ENCODE measurements at regions of chr13 and their contacts with region 1.

Region 1: DNA sequence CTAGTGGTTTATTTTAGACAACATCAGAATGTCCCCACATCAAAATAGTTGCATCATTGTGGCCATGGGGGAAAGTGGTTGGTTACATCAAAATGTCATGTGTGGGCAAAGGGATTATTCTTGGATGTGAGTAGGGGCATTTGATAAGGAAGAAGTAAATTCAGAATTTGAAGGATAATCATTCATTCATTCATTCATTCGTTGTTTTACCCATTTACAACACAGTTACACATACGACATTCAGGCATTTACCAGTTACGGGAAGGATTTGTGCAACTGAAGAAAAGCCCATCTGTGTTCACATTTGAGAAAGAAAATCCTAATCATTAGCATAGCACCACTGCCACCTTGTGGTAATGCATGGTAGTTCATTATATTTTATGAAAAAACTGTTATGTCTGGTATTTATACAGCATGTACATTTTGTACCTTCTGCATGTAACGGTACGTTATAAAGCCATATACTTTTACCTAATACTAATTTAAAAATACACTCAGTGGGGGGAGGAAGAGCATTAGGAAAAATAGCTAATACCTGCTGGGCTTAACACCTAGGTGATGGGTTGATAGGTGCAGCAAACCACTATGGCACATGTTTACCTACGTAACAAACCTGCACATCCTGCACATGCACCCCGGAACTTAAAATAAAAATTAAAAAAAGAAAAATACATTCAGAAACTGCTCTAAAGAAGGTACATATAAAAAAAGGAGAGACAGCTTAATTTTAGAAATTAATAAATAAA is 62.1 kb downstream of the DGKH start:
- DNase-seq: peak; percentile 43
- ATAC-seq: peak; percentile 22; the same call in 1 of the 2 replicates
- H3K4me3 ChIP-seq: no peak overlapping the region
- H3K27ac ChIP-seq: no peak overlapping the region
- H3K4me1 ChIP-seq: peaks cover 13 to 26% of the 10 kb centered on the region in 2 experiments
- H3K27me3 ChIP-seq: no peaks in the 10 kb centered on the region
- CTCF ChIP-seq: peak; percentile 45 to 81 (median 55); a peak in 4 of 6 replicates
- POLR2A ChIP-seq: no peak
- RAD21 ChIP-seq: peak; percentile 87

Region 2: DNA sequence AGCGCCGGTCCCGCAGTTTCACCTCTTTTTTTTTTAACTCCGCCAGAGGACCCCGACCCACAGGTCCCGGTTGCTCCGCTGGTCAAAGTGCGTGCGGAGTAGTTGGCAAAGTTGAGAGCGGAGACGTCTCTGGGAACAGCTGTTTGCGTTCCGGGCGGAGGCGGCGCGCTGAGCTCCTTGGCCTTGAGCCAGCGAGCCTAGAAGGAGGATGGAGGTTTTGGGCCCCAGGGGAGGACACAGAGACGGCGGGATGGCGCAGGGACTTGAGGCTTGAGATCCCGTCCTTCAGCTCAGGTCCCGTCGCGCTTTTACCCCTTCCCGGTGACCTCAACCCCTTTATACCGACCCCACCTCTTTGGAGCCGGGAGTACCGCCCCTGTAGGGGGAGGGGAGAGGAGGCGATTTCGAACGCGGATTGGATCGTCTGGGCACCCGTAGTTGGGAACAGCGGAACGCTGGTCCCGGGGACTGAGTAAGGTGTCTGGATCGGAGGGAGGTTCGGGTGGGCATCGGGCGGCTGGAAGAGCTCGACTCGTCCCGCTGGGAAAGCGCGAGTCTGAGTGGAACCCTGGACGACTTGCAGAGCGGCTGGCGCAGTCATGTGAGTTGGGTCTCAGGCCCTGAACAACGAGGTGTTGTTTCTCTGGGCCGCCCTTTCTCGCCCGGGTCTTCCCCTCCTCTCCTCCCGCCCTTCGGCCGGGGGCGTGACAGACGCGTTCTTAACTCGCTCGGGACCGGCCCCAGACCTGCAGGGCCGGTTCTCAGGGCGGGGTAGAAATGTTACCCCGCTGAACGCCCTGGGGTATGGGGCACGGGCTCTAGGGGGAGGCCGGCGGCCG is 1049.3 kb before region 1 on chr13 and contains the start of gene WBP4:
- CTCF ChIA-PET with region 1: no interaction called
- POLR2A ChIA-PET with region 1: interaction called, 4 read pairs
- RAD21 ChIA-PET with region 1: no interaction called
- intact Hi-C with region 1: loop called (anchors 5 kb)
- DNase-seq: peak; percentile 94
- ATAC-seq: peak; percentile 76
- H3K4me3 ChIP-seq: peak within 1 kb of the TSS; percentile 69 to 70
- H3K27ac ChIP-seq: peak within 1 kb of the TSS; percentile 94
- H3K4me1 ChIP-seq: peaks cover 49 to 67% of the 10 kb centered on the region in 2 experiments
- H3K27me3 ChIP-seq: no peaks in the 10 kb centered on the region
- CTCF ChIP-seq: no peak
- POLR2A ChIP-seq: peak; percentile 69
- RAD21 ChIP-seq: no peak
- total RNA-seq, gene WBP4: 14.5 TPM

Region 3: DNA sequence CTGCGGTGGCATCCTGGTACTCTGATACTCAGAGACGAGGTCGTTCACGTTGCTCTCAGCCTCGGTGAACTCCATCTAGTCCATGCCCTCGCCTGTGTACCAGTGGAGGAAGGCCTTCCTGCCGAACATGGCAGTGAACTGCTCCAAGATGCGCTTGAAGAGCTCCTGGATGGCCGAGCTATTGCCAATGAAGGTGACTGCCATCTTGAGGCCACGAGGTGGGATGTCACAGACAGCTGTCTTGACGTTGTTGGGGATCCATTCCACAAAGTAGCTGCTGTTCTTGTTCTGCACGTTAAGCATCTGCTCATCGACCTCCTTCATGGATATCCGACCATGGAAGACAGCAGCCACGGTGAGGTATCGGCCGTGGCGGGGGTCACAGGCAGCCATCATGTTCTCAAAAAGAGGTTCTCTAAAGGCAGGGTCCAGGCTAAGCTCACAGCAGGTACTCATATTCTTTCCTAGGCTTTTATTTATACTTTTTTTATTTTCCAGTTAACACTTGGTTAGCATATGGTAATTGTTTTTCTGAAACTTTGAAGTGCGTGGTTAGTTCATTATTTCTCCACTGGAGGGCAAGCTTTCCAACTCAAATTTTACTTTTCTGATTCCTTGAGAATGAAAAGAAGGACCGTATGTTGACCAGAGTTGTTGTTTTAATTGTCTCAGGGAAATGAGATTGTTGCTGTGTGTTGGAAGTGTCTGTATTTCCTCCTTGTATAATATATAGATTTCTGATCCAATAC is 725.7 kb before region 1 on chr13:
- CTCF ChIA-PET with region 1: interaction called, 3 read pairs
- POLR2A ChIA-PET with region 1: no interaction called
- RAD21 ChIA-PET with region 1: no interaction called
- intact Hi-C with region 1: loop called (anchors 10 kb)
- DNase-seq: no peak
- ATAC-seq: peak; percentile 52
- H3K4me3 ChIP-seq: no peak overlapping the region
- H3K27ac ChIP-seq: no peak overlapping the region
- H3K4me1 ChIP-seq: no peaks in the 10 kb centered on the region
- H3K27me3 ChIP-seq: no peaks in the 10 kb centered on the region
- CTCF ChIP-seq: peak; percentile 28 to 58 (median 40); a peak in 4 of 6 replicates
- POLR2A ChIP-seq: no peak
- RAD21 ChIP-seq: peak; percentile 50

Region 4: GRCh38 chr13:41411522-41411921 is 699.1 kb before region 1 on chr13:
- CTCF ChIA-PET with region 1: no interaction called
- POLR2A ChIA-PET with region 1: no interaction called
- RAD21 ChIA-PET with region 1: no interaction called
- intact Hi-C with region 1: loop called (anchors 1 kb)
- DNase-seq: peak; percentile 23
- ATAC-seq: peak; percentile 89
- H3K4me3 ChIP-seq: no peak overlapping the region
- H3K27ac ChIP-seq: no peak overlapping the region
- H3K4me1 ChIP-seq: 0 out of 4 replicates have a peak, but pooled peaks cover 0 to 4% of the 10 kb centered on the region in 2 experiments
- H3K27me3 ChIP-seq: no peaks in the 10 kb centered on the region
- CTCF ChIP-seq: peak; percentile 24 to 36 (median 32); a peak in 3 of 6 replicates
- POLR2A ChIP-seq: no peak
- RAD21 ChIP-seq: peak; percentile 70

Region 5: GRCh38 chr13:41774605-41775218 is 335.9 kb before region 1 on chr13:
- CTCF ChIA-PET with region 1: no interaction called
- POLR2A ChIA-PET with region 1: no interaction called
- RAD21 ChIA-PET with region 1: no interaction called
- intact Hi-C with region 1: no loop called
- DNase-seq: no peak
- ATAC-seq: no peak
- H3K4me3 ChIP-seq: no peak overlapping the region
- H3K27ac ChIP-seq: no peak overlapping the region
- H3K4me1 ChIP-seq: no peaks in the 10 kb centered on the region
- H3K27me3 ChIP-seq: no peaks in the 10 kb centered on the region
- CTCF ChIP-seq: no peak
- POLR2A ChIP-seq: no peak
- RAD21 ChIP-seq: no peak

Region 6: GRCh38 chr13:41905600-41906254 is 204.9 kb before region 1 on chr13:
- CTCF ChIA-PET with region 1: no interaction called
- POLR2A ChIA-PET with region 1: no interaction called
- RAD21 ChIA-PET with region 1: no interaction called
- intact Hi-C with region 1: loop called (anchors 2 kb)
- DNase-seq: peak; percentile 34
- ATAC-seq: peak; percentile 97
- H3K4me3 ChIP-seq: no peak overlapping the region
- H3K27ac ChIP-seq: no peak overlapping the region
- H3K4me1 ChIP-seq: peaks cover 0 to 8% of the 10 kb centered on the region in 2 experiments; a peak in 2 of 4 replicates
- H3K27me3 ChIP-seq: no peaks in the 10 kb centered on the region
- CTCF ChIP-seq: peak; percentile 12 to 69 (median 63); a peak in 5 of 6 replicates
- POLR2A ChIP-seq: no peak
- RAD21 ChIP-seq: peak; percentile 41; the same call in 1 of the 2 replicates

Region 7: GRCh38 chr13:42048682-42049453 is 61.7 kb before region 1 on chr13:
- CTCF ChIA-PET with region 1: no interaction called
- POLR2A ChIA-PET with region 1: no interaction called
- RAD21 ChIA-PET with region 1: interaction called in 1 of 2 experiments, 3 read pairs
- intact Hi-C with region 1: loop called (anchors 5 kb)
- DNase-seq: peak; percentile 33
- ATAC-seq: peak; percentile 76
- H3K4me3 ChIP-seq: peak overlapping the region; percentile 69 to 83
- H3K27ac ChIP-seq: peak overlapping the region; percentile 85
- H3K4me1 ChIP-seq: peaks cover 10 to 17% of the 10 kb centered on the region in 2 experiments
- H3K27me3 ChIP-seq: no peaks in the 10 kb centered on the region
- CTCF ChIP-seq: 0 out of 6 replicates have a peak, but pooled peaks of 1 of the 3 experiments have one; percentile 7
- POLR2A ChIP-seq: peak; percentile 64
- RAD21 ChIP-seq: no peak

Region 8: DNA sequence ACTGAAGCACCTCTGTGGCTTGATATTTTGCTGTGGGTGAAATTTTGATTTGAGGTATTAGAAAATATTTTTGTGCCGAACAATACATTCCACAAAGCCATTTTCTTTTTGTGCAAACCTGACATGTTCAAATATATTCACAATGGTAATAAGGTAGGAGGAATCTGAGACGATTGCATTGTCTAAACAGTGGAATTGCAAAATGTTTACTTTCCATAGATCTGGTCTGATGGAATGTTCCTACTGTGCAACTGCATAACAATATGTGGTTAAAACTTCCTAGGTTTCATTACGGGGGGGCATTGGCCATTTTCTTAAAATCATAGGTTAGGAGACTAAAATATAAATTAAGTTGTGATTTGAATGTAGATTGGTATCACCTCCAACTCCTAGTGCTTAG is 118.7 kb after region 1 on chr13:
- CTCF ChIA-PET with region 1: no interaction called
- POLR2A ChIA-PET with region 1: no interaction called
- RAD21 ChIA-PET with region 1: no interaction called
- intact Hi-C with region 1: no loop called
- DNase-seq: no peak
- ATAC-seq: no peak
- H3K4me3 ChIP-seq: no peak overlapping the region
- H3K27ac ChIP-seq: no peak overlapping the region
- H3K4me1 ChIP-seq: no peaks in the 10 kb centered on the region
- H3K27me3 ChIP-seq: no peaks in the 10 kb centered on the region
- CTCF ChIP-seq: no peak
- POLR2A ChIP-seq: no peak
- RAD21 ChIP-seq: no peak